HepG2 (cell line): ENCODE measurements at regions of chr3 and their contacts with region 1.

Region 1: GRCh38 chr3:70358978-70359580 is 46.6 kb upstream of the MDFIC2 start:
- DNase-seq: peak; percentile 2
- ATAC-seq: no peak
- H3K4me3 ChIP-seq: no peak overlapping the region
- H3K27ac ChIP-seq: no peak overlapping the region
- H3K4me1 ChIP-seq: no peaks in the 10 kb centered on the region
- H3K27me3 ChIP-seq: no peaks in the 10 kb centered on the region
- CTCF ChIP-seq: peak; percentile 62
- EP300 ChIP-seq: no peak
- POLR2A ChIP-seq: no peak
- RAD21 ChIP-seq: no peak

Region 2: GRCh38 chr3:70090322-70090913 is 268.7 kb before region 1 on chr3:
- CTCF ChIA-PET with region 1: interaction called, 5 read pairs
- POLR2A ChIA-PET with region 1: no interaction called
- in situ Hi-C with region 1: no loop called
- intact Hi-C with region 1: loop called (anchors 1 kb)
- DNase-seq: no peak
- ATAC-seq: no peak
- H3K4me3 ChIP-seq: no peak overlapping the region
- H3K27ac ChIP-seq: no peak overlapping the region
- H3K4me1 ChIP-seq: no peaks in the 10 kb centered on the region
- H3K27me3 ChIP-seq: no peaks in the 10 kb centered on the region
- CTCF ChIP-seq: no peak
- EP300 ChIP-seq: no peak
- POLR2A ChIP-seq: no peak
- RAD21 ChIP-seq: no peak

Region 3: GRCh38 chr3:70120357-70121121 is 238.5 kb before region 1 on chr3:
- CTCF ChIA-PET with region 1: interaction called, 15 read pairs
- POLR2A ChIA-PET with region 1: no interaction called
- in situ Hi-C with region 1: loop called (anchors 10 kb)
- intact Hi-C with region 1: loop called (anchors 1 kb)
- DNase-seq: peak; percentile 65
- ATAC-seq: peak; percentile 96
- H3K4me3 ChIP-seq: no peak overlapping the region
- H3K27ac ChIP-seq: no peak overlapping the region
- H3K4me1 ChIP-seq: no peaks in the 10 kb centered on the region
- H3K27me3 ChIP-seq: no peaks in the 10 kb centered on the region; a peak in 1 of 5 replicates
- CTCF ChIP-seq: peak; percentile 86
- EP300 ChIP-seq: no peak
- POLR2A ChIP-seq: no peak
- RAD21 ChIP-seq: 0 out of 2 replicates have a peak, but pooled peaks have one; percentile 35